Astrocyte of the cerebellum (primary cell): ENCODE measurements at regions of chr17 and their contacts with region 1.

Region 1: DNA sequence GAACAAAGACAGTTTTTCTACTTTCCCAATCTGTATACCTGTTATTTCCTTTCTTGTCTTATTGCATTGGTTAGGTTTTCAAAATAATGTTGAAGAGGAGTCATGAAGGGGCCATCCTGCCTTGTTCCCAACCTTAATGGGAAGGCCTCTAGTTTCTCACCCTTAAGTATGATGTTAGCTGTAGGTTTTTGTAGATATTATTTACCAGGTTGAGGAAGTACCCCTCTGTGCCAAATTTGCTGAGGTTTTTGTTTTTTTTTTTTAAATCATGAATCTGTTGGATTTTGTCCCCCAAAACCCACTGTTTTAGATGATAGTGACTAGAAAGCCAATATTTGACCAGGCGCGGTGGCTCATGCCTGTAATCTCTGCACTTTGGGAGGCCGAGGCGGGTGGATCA is 36.4 kb downstream of the VMP1 start:
- DNase-seq: no peak
- H3K4me3 ChIP-seq: no peak overlapping the region
- CTCF ChIP-seq: no peak

Region 2: DNA sequence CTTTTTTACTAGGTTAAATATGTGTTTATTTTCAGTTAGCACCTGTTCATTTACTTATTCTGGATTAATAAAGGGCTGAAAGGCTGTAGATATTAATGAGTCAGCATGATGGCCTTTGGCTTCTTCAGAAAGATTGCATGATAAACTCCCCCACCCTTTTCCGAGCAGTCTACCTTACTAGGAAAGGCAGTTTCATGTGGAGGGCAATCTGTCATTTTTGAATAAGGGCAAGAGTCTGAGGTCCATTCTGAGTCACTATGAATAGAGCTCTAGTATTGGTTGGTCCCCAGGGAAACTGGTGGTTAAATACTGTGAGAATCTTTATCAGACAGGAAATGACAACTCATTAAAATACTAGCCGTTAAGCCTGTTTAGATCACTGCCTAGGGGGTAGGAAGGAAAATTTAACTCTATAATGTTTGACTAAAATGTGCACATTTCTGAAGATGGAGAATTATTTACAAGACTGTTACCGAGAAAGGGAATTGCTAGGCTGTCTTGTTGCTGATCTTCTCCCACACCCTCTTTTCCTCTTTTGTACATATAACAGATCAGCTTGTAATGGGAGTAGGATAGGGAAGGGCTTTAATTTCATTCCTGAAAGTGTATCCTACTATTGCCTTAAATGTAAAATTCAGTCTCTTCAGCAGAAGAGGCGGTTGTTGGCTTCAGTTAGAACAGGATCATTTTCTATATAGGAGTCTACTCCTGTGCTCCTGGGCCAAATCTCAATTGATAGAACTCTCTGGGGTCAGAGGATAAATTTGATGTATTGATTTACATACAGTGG is 85.6 kb after region 1 on chr17:
- in situ Hi-C with region 1: loop called (anchors 5 kb)
- DNase-seq: peak; percentile 96
- H3K4me3 ChIP-seq: peak overlapping the region; percentile 23
- CTCF ChIP-seq: no peak